GM12878 (cell line): ENCODE measurements at regions of chr4 and their contacts with region 1.

Region 1: DNA sequence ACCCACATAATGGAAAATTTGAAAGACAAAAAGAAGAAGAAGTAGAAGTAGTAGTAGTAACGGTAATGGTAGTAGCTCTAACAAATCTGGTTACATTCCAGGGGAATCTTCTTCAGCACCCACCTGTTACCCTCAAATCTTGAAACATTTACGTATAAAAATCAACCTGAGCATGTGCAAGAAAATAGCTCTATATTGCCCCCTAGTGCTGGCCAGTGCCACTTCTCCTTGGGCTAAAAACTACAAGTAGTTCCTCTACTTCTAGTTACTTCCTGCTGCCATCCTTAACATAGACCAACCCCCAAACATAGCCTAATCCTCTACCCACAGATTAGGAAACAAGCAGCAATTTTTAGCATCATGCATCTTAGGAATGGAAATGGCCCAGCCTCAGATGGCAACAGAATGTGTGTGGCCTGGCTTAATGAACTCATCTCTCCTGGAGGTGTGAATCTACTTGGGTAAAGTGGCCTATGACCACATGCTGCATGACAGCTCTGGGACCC is 3.1 kb downstream of the PDGFC start:
- DNase-seq: no peak
- ATAC-seq: peak; percentile 93
- H3K4me3 ChIP-seq: no peak overlapping the region
- H3K27ac ChIP-seq: no peak overlapping the region
- H3K4me1 ChIP-seq: no peaks in the 10 kb centered on the region
- H3K27me3 ChIP-seq: peaks cover 4 to 18% of the 10 kb centered on the region in 2 experiments
- CTCF ChIP-seq: peak; percentile 73 to 76 (median 74)
- EP300 ChIP-seq: no peak
- POLR2A ChIP-seq: no peak
- RAD21 ChIP-seq: peak; percentile 74

Region 2: DNA sequence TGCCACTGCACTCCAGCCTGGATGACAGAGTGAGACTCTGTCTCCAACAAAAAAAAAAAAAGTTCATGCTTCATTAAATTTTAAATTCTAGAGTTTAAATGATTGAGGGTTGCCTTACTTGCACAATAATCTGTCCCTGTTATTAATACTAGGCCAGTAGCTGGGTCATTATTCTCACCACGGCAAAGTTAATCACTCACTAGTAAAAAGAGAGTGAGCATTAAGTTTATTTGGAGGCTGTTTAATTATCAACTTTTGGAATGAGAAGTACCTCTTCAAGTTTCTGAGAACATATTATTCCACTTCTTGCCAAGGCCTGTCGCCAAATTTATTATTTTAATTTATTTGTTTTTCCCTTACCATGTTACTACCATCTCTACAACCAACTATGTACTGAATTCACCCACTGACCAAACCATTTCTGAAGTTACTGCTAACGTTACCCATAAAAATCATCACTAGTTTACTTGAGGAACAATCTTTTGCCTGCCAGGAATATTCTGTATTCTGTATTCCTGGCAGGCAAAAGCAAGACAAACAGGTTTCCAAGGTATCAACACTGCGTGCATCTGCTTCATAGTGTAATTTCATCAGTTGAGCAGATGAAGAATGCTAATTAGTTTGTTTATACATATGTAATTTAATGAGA is 1275.4 kb before region 1 on chr4:
- CTCF ChIA-PET with region 1: no interaction called
- POLR2A ChIA-PET with region 1: no interaction called
- RAD21 ChIA-PET with region 1: no interaction called
- SMC1A ChIA-PET with region 1: no interaction called
- in situ Hi-C with region 1: no loop called
- intact Hi-C with region 1: no loop called
- DNase-seq: no peak
- ATAC-seq: peak; percentile 25; the same call in 2 of the 3 replicates
- H3K4me3 ChIP-seq: no peak overlapping the region
- H3K27ac ChIP-seq: no peak overlapping the region
- H3K4me1 ChIP-seq: no peaks in the 10 kb centered on the region
- H3K27me3 ChIP-seq: no peaks in the 10 kb centered on the region
- CTCF ChIP-seq: no peak
- EP300 ChIP-seq: no peak
- POLR2A ChIP-seq: no peak
- RAD21 ChIP-seq: no peak

Region 3: GRCh38 chr4:155809835-155810234 is 1158.7 kb before region 1 on chr4:
- CTCF ChIA-PET with region 1: interaction called, 3 read pairs
- POLR2A ChIA-PET with region 1: no interaction called
- RAD21 ChIA-PET with region 1: no interaction called
- SMC1A ChIA-PET with region 1: no interaction called
- in situ Hi-C with region 1: loop called (anchors 25 kb)
- intact Hi-C with region 1: no loop called
- DNase-seq: peak; percentile 55
- ATAC-seq: peak; percentile 99
- H3K4me3 ChIP-seq: no peak overlapping the region
- H3K27ac ChIP-seq: no peak overlapping the region
- H3K4me1 ChIP-seq: no peaks in the 10 kb centered on the region
- H3K27me3 ChIP-seq: no peaks in the 10 kb centered on the region
- CTCF ChIP-seq: peak; percentile 40 to 69 (median 54); a peak in 5 of 6 replicates
- EP300 ChIP-seq: no peak
- POLR2A ChIP-seq: no peak
- RAD21 ChIP-seq: peak; percentile 81

Region 4: DNA sequence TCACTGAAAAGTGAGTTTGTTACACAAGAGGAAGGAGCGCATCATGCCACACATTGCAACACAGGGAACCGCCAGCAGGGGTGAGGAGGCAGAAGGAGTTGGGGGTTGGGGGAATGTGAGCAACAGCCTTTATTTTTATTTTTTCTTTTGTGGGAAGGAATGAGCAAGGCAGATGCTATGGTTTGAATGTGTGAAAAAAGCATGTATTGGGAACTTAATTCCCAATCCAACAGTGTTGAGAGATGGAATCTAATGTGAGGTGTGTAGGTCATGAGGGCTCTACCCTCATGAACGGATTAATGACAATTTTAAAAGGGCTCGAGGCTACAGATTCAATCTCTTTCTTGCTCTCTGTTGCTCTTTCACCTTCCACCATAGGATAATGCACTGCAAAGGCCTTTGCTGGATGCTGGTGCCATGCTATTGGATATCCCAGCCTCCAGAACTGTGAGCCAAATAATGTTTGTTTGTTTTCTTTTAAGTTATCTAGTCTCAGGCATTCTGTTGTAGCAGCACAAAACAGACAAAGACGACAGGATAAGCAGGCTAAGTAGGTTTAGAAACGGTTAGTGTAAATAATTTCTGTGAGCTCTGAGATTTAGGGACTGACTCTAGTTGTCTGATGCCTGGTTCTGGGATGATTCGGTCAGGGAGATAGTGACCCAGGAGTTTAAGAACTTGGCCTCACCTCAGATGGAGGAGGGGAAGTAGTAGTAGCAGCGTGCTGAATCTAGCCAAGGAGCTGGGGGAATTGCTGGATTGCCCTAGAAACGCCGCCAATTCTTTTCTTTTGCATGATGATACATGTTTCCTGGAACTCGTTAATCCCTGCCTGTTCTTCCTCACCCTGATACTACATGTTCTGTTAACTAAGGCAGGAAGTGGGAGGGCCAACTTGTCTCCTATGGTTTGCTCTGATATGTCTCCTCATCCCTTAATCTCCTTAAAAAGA is 858.3 kb before region 1 on chr4:
- CTCF ChIA-PET with region 1: interaction called, 13 read pairs
- POLR2A ChIA-PET with region 1: no interaction called
- RAD21 ChIA-PET with region 1: interaction called, 5 read pairs
- SMC1A ChIA-PET with region 1: interaction called, 21 read pairs
- in situ Hi-C with region 1: no loop called
- intact Hi-C with region 1: loop called (anchors 10 kb)
- DNase-seq: no peak
- ATAC-seq: peak; percentile 69
- H3K4me3 ChIP-seq: no peak overlapping the region
- H3K27ac ChIP-seq: no peak overlapping the region
- H3K4me1 ChIP-seq: no peaks in the 10 kb centered on the region
- H3K27me3 ChIP-seq: no peaks in the 10 kb centered on the region
- CTCF ChIP-seq: peak in 2 of 3 experiments; percentile 23 to 40; a peak in 2 of 6 replicates
- EP300 ChIP-seq: no peak
- POLR2A ChIP-seq: no peak
- RAD21 ChIP-seq: no peak

Region 5: DNA sequence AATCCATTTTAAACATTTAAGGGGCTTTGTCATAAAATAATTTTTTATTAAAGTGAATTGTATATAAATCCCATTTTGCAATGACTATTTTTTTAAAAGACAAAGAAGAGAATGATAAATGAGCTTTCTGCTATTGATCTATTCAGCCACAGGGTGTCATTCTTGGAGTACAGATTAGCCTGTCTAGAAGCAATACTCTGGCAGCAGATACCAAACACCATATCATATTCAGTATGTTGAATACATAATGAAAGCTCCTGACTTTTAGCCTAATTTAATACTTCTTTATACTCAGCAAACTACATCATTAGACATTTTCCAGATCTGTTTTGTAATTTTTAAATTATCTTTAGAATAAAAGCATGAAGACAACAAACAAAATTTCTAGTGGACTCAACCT is 493.2 kb before region 1 on chr4:
- CTCF ChIA-PET with region 1: interaction called, 11 read pairs
- POLR2A ChIA-PET with region 1: no interaction called
- RAD21 ChIA-PET with region 1: interaction called, 14 read pairs
- SMC1A ChIA-PET with region 1: interaction called, 17 read pairs
- in situ Hi-C with region 1: no loop called
- intact Hi-C with region 1: loop called (anchors 1 kb)
- DNase-seq: no peak
- ATAC-seq: peak; percentile 61
- H3K4me3 ChIP-seq: no peak overlapping the region
- H3K27ac ChIP-seq: no peak overlapping the region
- H3K4me1 ChIP-seq: no peaks in the 10 kb centered on the region
- H3K27me3 ChIP-seq: no peaks in the 10 kb centered on the region
- CTCF ChIP-seq: peak in 2 of 3 experiments; percentile 13 to 34; a peak in 2 of 6 replicates
- EP300 ChIP-seq: no peak
- POLR2A ChIP-seq: no peak
- RAD21 ChIP-seq: peak; percentile 68

Region 6: GRCh38 chr4:156686120-156686519 is 282.4 kb before region 1 on chr4:
- CTCF ChIA-PET with region 1: interaction called, 4 read pairs
- POLR2A ChIA-PET with region 1: no interaction called
- RAD21 ChIA-PET with region 1: interaction called, 3 read pairs
- SMC1A ChIA-PET with region 1: no interaction called
- in situ Hi-C with region 1: no loop called
- intact Hi-C with region 1: loop called (anchors 10 kb)
- DNase-seq: no peak
- ATAC-seq: no peak
- H3K4me3 ChIP-seq: no peak overlapping the region
- H3K27ac ChIP-seq: no peak overlapping the region
- H3K4me1 ChIP-seq: no peaks in the 10 kb centered on the region
- H3K27me3 ChIP-seq: no peaks in the 10 kb centered on the region
- CTCF ChIP-seq: no peak
- EP300 ChIP-seq: no peak
- POLR2A ChIP-seq: no peak
- RAD21 ChIP-seq: no peak

Region 7: DNA sequence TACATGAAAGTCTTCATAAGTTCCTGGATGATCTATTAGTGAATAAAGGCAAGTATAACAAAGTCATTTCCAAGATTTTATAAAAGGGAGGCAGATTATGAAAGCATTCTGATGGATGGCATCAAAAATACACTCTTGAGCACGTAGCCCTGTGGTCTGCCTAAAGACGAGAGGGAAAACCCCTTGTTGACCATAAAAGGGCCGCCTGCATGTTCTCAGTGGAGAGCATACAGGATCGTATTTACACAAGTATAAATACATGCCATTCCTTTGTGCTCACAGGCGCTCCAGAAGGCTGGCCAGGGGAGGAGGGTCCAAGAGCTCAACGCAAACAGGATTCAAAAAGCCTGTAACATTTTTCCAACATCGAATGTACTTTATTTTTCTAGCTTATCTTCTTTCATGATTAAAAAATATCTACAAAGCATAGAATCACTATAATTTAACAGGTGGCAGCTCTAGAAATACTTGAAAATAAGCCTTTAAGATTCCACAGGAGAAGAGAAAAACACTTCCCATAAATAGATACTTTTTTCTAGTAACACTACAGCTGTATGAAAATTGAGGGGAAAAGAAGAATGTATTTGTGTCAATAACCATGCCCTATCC is 26.5 kb before region 1 on chr4:
- CTCF ChIA-PET with region 1: interaction called, 12 read pairs
- POLR2A ChIA-PET with region 1: no interaction called
- RAD21 ChIA-PET with region 1: interaction called, 3 read pairs
- SMC1A ChIA-PET with region 1: interaction called, 4 read pairs
- in situ Hi-C with region 1: no loop called
- intact Hi-C with region 1: no loop called
- DNase-seq: no peak
- ATAC-seq: peak; percentile 82
- H3K4me3 ChIP-seq: no peak overlapping the region
- H3K27ac ChIP-seq: no peak overlapping the region
- H3K4me1 ChIP-seq: no peaks in the 10 kb centered on the region
- H3K27me3 ChIP-seq: no peaks in the 10 kb centered on the region
- CTCF ChIP-seq: no peak
- EP300 ChIP-seq: no peak
- POLR2A ChIP-seq: no peak
- RAD21 ChIP-seq: no peak

Region 8: DNA sequence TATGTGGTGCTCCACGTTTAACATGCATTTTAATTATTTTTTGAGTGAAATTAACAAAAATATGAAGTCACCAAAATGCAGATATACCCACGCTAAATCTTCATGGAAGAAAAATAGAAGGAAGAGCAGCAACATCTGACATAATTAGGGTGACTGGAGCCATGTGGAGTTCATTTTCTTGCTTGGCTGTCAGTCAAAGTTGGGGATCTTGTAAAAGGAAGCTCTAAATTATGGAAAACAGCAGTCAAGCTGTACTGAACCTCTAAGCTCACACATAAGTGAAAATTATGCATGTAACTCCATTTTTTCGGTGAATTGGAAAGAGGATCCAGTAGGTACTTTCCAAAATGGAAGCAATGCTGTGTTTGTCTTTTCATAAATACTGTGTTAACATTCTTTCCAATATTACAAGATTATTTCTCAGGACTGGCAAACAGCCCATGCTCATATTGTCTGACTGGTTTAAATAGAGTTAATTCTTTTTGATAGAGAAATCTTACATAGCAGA is 12.8 kb after region 1 on chr4:
- CTCF ChIA-PET with region 1: interaction called, 20 read pairs
- POLR2A ChIA-PET with region 1: no interaction called
- RAD21 ChIA-PET with region 1: no interaction called
- SMC1A ChIA-PET with region 1: no interaction called
- in situ Hi-C with region 1: no loop called
- intact Hi-C with region 1: no loop called
- DNase-seq: no peak
- ATAC-seq: no peak
- H3K4me3 ChIP-seq: no peak overlapping the region
- H3K27ac ChIP-seq: no peak overlapping the region
- H3K4me1 ChIP-seq: no peaks in the 10 kb centered on the region
- H3K27me3 ChIP-seq: no peaks in the 10 kb centered on the region
- CTCF ChIP-seq: no peak
- EP300 ChIP-seq: no peak
- POLR2A ChIP-seq: no peak
- RAD21 ChIP-seq: no peak

Region 9: GRCh38 chr4:156999175-156999516 is 30.6 kb after region 1 on chr4:
- CTCF ChIA-PET with region 1: no interaction called
- POLR2A ChIA-PET with region 1: no interaction called
- RAD21 ChIA-PET with region 1: no interaction called
- SMC1A ChIA-PET with region 1: no interaction called
- in situ Hi-C with region 1: no loop called
- intact Hi-C with region 1: no loop called
- DNase-seq: no peak
- ATAC-seq: no peak
- H3K4me3 ChIP-seq: no peak overlapping the region
- H3K27ac ChIP-seq: no peak overlapping the region
- H3K4me1 ChIP-seq: no peaks in the 10 kb centered on the region
- H3K27me3 ChIP-seq: no peaks in the 10 kb centered on the region; a peak in 1 of 4 replicates
- CTCF ChIP-seq: no peak
- EP300 ChIP-seq: no peak
- POLR2A ChIP-seq: no peak
- RAD21 ChIP-seq: no peak